A673 (cell line): ENCODE measurements at regions of chr16 and their contacts with region 1.

Region 1: GRCh38 chr16:1000608-1001007 is 19.0 kb downstream of the SOX8 start:
- DNase-seq: no peak
- H3K4me3 ChIP-seq: no peak overlapping the region
- H3K27ac ChIP-seq: no peak overlapping the region
- H3K4me1 ChIP-seq: peaks cover 14% of the 10 kb centered on the region
- H3K27me3 ChIP-seq: no peaks in the 10 kb centered on the region
- CTCF ChIP-seq: no peak

Region 2: DNA sequence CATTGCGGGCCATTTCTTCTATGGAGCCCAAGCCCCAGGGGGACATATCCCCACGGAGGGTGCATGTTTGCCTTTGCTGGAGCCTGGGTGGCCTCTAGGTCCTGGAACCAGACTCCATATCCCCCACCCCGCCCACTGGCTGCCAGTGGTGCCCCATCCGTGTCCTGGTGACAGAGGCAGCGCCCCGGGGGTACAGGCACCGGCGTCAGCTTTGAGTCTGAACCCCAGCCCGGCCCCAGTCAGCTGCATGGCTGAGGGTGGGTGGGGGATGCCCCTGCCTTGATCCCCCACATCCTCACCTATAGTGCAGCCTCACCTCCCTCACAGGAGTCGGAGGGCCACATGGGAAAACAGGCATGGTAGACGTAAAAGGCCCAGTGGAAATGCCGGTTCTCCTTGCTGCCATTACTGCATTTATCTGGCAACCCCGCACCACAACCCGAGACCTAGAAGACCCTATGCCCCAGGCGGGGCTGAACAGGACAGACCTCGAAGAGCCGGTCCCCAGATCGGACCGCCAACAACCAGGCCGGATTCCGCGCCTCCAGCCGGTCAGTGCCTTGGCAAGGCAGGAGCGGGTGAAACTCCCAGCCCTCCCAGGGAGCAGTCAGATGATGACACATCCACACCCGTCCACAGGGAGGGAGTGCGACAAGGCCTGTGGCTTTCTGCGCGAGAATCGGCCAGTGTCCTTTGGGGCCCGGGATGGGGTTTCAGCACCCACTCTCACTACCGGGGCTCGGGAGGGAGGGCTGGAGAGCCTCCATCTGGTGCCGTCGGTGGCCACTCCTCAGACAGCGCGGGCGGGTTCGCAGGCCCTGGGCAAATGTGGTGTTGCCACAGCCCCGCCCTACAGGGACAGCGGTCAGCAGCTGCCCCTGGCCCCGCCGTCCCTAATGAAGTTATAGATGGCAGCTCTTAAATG is 60.1 kb after region 1 on chr16:
- CTCF ChIA-PET with region 1: interaction called, 10 read pairs
- POLR2A ChIA-PET with region 1: no interaction called
- intact Hi-C with region 1: no loop called
- DNase-seq: no peak
- H3K4me3 ChIP-seq: no peak overlapping the region
- H3K27ac ChIP-seq: no peak overlapping the region
- H3K4me1 ChIP-seq: no peaks in the 10 kb centered on the region
- H3K27me3 ChIP-seq: peaks cover 27% of the 10 kb centered on the region
- CTCF ChIP-seq: no peak